Naive thymus-derived CD4-positive, alpha-beta T cell (primary cell): ENCODE measurements at regions of chr3 and their contacts with region 1.

Region 1: GRCh38 chr3:122406198-122406597 is 9.7 kb downstream of the WDR5B start:
- DNase-seq: no peak
- ATAC-seq: no peak
- H3K4me3 ChIP-seq: no peak overlapping the region
- H3K4me3 Mint-ChIP-seq: no peak overlapping the region
- H3K27ac ChIP-seq: no peak overlapping the region
- H3K27ac Mint-ChIP-seq: no peak overlapping the region
- H3K4me1 ChIP-seq: no peaks in the 10 kb centered on the region
- H3K4me1 Mint-ChIP-seq: peaks cover 0 to 16% (median 7%) of the 10 kb centered on the region in 7 donors
- H3K27me3 ChIP-seq: no peaks in the 10 kb centered on the region
- H3K27me3 Mint-ChIP-seq: no peaks in the 10 kb centered on the region

Region 2: GRCh38 chr3:122392868-122393844 is 13.0 kb before region 1 on chr3:
- CTCF ChIA-PET with region 1: interaction called, 10 read pairs
- POLR2A ChIA-PET with region 1: interaction called, 3 read pairs
- intact Hi-C with region 1: no loop called
- DNase-seq: peak in 7 of 9 donors; percentile 27 to 56 (median 46)
- ATAC-seq: peak; percentile 75
- H3K4me3 ChIP-seq: no peak overlapping the region
- H3K4me3 Mint-ChIP-seq: no peak overlapping the region
- H3K27ac ChIP-seq: no peak overlapping the region
- H3K27ac Mint-ChIP-seq: no peak overlapping the region
- H3K4me1 ChIP-seq: no peaks in the 10 kb centered on the region
- H3K4me1 Mint-ChIP-seq: peaks cover 7 to 36% (median 18%) of the 10 kb centered on the region in 7 donors
- H3K27me3 ChIP-seq: no peaks in the 10 kb centered on the region
- H3K27me3 Mint-ChIP-seq: no peaks in the 10 kb centered on the region